K562 (cell line): ENCODE measurements at regions of chr1 and their contacts with region 1.

Region 1: DNA sequence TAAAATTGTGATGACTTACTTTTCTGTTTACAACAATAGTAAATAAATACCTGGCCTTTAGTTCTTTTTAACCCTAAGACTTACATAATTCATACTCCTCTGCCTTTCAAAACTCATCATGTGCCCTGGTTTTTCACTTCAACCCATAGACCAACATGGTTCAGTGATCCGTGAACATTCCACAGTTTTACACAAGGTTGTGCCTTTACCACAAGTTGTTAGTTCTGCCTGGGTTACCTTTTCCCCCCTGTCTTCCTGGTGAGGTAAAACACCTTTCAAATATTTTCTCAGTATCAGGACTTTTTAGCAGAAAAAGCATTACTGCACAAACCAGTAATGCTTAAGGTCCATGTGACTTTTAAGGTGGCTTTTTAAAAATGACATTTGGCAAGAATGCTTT is 1466.4 kb downstream of the PLA2G4A start:
- DNase-seq: no peak
- ATAC-seq: no peak
- H3K4me3 ChIP-seq: no peak overlapping the region
- H3K27ac ChIP-seq: no peak overlapping the region
- H3K4me1 ChIP-seq: no peaks in the 10 kb centered on the region
- H3K27me3 ChIP-seq: no peaks in the 10 kb centered on the region
- CTCF ChIP-seq: no peak
- EP300 ChIP-seq: no peak
- POLR2A ChIP-seq: no peak
- RAD21 ChIP-seq: no peak

Region 2: GRCh38 chr1:186899577-186899976 is 1395.6 kb before region 1 on chr1:
- CTCF ChIA-PET with region 1: no interaction called
- POLR2A ChIA-PET with region 1: no interaction called
- in situ Hi-C with region 1: loop called (anchors 10 kb)
- intact Hi-C with region 1: no loop called
- DNase-seq: no peak
- ATAC-seq: no peak
- H3K4me3 ChIP-seq: no peak overlapping the region
- H3K27ac ChIP-seq: no peak overlapping the region
- H3K4me1 ChIP-seq: no peaks in the 10 kb centered on the region
- H3K27me3 ChIP-seq: no peaks in the 10 kb centered on the region
- CTCF ChIP-seq: no peak
- EP300 ChIP-seq: no peak
- POLR2A ChIP-seq: no peak
- RAD21 ChIP-seq: no peak